ENCODE measurements at regions of chr7 and their contacts with region 1.

Region 1: DNA sequence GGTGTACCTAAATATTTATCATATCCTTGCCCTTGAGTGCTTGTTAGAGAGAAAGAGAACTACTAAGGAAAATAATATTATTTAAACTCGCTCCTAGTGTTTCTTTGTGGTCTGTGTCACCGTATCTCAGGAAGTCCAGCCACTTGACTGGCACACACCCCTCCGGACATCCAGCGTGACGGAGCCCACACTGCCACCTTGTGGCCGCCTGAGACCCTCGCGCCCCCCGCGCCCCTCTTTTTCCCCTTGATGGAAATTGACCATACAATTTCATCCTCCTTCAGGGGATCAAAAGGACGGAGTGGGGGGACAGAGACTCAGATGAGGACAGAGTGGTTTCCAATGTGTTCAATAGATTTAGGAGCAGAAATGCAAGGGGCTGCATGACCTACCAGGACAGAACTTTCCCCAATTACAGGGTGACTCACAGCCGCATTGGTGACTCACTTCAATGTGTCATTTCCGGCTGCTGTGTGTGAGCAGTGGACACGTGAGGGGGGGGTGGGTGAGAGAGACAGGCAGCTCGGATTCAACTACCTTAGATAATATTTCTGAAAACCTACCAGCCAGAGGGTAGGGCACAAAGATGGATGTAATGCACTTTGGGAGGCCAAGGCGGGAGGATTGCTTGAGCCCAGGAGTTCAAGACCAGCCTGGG is 11.4 kb downstream of the SERPINE1 start:
- DNase-seq: peak; percentile 46 to 92 (median 84)
- ATAC-seq: peak; percentile 94
- H3K4me3 ChIP-seq: no peak overlapping the region
- H3K4me3 Mint-ChIP-seq: peak overlapping the region; percentile 22
- H3K27ac ChIP-seq: no peak overlapping the region
- H3K27ac Mint-ChIP-seq: no peak overlapping the region
- H3K4me1 ChIP-seq: peaks cover 5% of the 10 kb centered on the region
- H3K4me1 Mint-ChIP-seq: peaks cover 10% of the 10 kb centered on the region
- H3K27me3 ChIP-seq: no peaks in the 10 kb centered on the region
- H3K27me3 Mint-ChIP-seq: peaks cover 16% of the 10 kb centered on the region
- CTCF ChIP-seq: peak; percentile 65

Region 2: GRCh38 chr7:100921039-100921438 is 217.3 kb before region 1 on chr7:
- CTCF ChIA-PET with region 1: no interaction called
- POLR2A ChIA-PET with region 1: no interaction called
- intact Hi-C with region 1: no loop called
- DNase-seq: no peak
- ATAC-seq: no peak
- H3K4me3 ChIP-seq: no peak overlapping the region
- H3K4me3 Mint-ChIP-seq: no peak overlapping the region
- H3K27ac ChIP-seq: no peak overlapping the region
- H3K27ac Mint-ChIP-seq: no peak overlapping the region
- H3K4me1 ChIP-seq: no peaks in the 10 kb centered on the region
- H3K4me1 Mint-ChIP-seq: no peaks in the 10 kb centered on the region
- H3K27me3 ChIP-seq: no peaks in the 10 kb centered on the region
- H3K27me3 Mint-ChIP-seq: peaks cover 19% of the 10 kb centered on the region
- CTCF ChIP-seq: no peak

Region 3: GRCh38 chr7:101085162-101085987 is 53.0 kb before region 1 on chr7 and contains the start of gene TRIM56:
- CTCF ChIA-PET with region 1: interaction called, 5 read pairs
- POLR2A ChIA-PET with region 1: no interaction called
- intact Hi-C with region 1: loop called in 1 of 2 experiments (anchors 5 kb)
- DNase-seq: peak; percentile 43 to 89 (median 76)
- ATAC-seq: peak; percentile 91
- H3K4me3 ChIP-seq: peak within 1 kb of the TSS; percentile 81 to 95
- H3K4me3 Mint-ChIP-seq: peak within 1 kb of the TSS; percentile 98
- H3K27ac ChIP-seq: peak within 1 kb of the TSS; percentile 91 to 94
- H3K27ac Mint-ChIP-seq: peak within 1 kb of the TSS; percentile 98
- H3K4me1 ChIP-seq: peaks cover 30% of the 10 kb centered on the region
- H3K4me1 Mint-ChIP-seq: peaks cover 27% of the 10 kb centered on the region
- H3K27me3 ChIP-seq: no peaks in the 10 kb centered on the region
- H3K27me3 Mint-ChIP-seq: no peaks in the 10 kb centered on the region
- CTCF ChIP-seq: no peak
- total RNA-seq, gene TRIM56: 24.0 to 26.0 TPM

Region 4: GRCh38 chr7:101153969-101154692 is 15.8 kb after region 1 on chr7 and contains the start of gene AP1S1:
- CTCF ChIA-PET with region 1: interaction called, 85 read pairs
- POLR2A ChIA-PET with region 1: no interaction called
- intact Hi-C with region 1: loop called in 1 of 2 experiments (anchors 1 kb)
- DNase-seq: peak; percentile 76 to 96 (median 87)
- ATAC-seq: peak; percentile 88
- H3K4me3 ChIP-seq: peak within 1 kb of the TSS; percentile 61 to 77
- H3K4me3 Mint-ChIP-seq: peak within 1 kb of the TSS; percentile 88
- H3K27ac ChIP-seq: no peak within 1 kb of the TSS
- H3K27ac Mint-ChIP-seq: peak within 1 kb of the TSS; percentile 47
- H3K4me1 ChIP-seq: peaks cover 12% of the 10 kb centered on the region
- H3K4me1 Mint-ChIP-seq: peaks cover 11% of the 10 kb centered on the region
- H3K27me3 ChIP-seq: no peaks in the 10 kb centered on the region
- H3K27me3 Mint-ChIP-seq: peaks cover 9% of the 10 kb centered on the region
- CTCF ChIP-seq: no peak
- total RNA-seq, gene AP1S1: 2.1 to 2.2 TPM

Region 5: DNA sequence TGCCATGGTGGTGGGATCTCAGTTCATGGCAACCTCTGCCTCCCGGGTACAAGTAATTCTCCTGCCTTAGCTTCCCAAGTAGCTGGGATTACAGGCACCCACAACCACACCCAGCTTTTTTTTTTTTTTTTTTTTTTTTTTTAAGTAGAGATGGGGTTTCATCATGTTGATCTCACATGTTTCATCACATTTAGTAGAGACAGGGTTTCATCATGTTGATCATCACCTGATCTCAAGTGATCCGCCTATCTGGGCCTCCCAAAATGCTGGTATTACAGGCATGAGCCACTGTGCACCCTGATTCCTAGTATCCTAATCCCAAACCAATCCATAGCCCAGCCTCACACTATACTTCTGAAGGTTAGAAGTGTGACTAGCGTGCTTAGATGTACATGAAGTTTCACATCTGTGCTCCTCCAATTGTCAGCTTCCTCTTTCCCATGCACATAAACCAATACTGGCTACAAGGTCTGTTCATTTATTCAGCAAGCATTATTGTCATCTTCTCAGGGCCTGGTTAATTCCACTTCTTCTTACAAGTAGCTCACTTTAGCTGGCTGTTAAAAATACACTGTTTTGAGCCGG is 48.6 kb after region 1 on chr7:
- CTCF ChIA-PET with region 1: interaction called, 136 read pairs
- POLR2A ChIA-PET with region 1: interaction called, 3 read pairs
- intact Hi-C with region 1: no loop called
- DNase-seq: no peak
- ATAC-seq: no peak
- H3K4me3 ChIP-seq: no peak overlapping the region
- H3K4me3 Mint-ChIP-seq: no peak overlapping the region
- H3K27ac ChIP-seq: no peak overlapping the region
- H3K27ac Mint-ChIP-seq: no peak overlapping the region
- H3K4me1 ChIP-seq: no peaks in the 10 kb centered on the region
- H3K4me1 Mint-ChIP-seq: peaks cover 4% of the 10 kb centered on the region
- H3K27me3 ChIP-seq: peaks cover 0 to 2% of the 10 kb centered on the region in 2 experiments
- H3K27me3 Mint-ChIP-seq: peaks cover 28% of the 10 kb centered on the region
- CTCF ChIP-seq: no peak

Region 6: GRCh38 chr7:101278461-101279292 is 140.3 kb after region 1 on chr7:
- CTCF ChIA-PET with region 1: interaction called, 104 read pairs
- POLR2A ChIA-PET with region 1: no interaction called
- intact Hi-C with region 1: no loop called
- DNase-seq: no peak
- ATAC-seq: no peak
- H3K4me3 ChIP-seq: no peak overlapping the region
- H3K4me3 Mint-ChIP-seq: no peak overlapping the region
- H3K27ac ChIP-seq: no peak overlapping the region
- H3K27ac Mint-ChIP-seq: no peak overlapping the region
- H3K4me1 ChIP-seq: peaks cover 4% of the 10 kb centered on the region
- H3K4me1 Mint-ChIP-seq: peaks cover 6% of the 10 kb centered on the region
- H3K27me3 ChIP-seq: no peaks in the 10 kb centered on the region
- H3K27me3 Mint-ChIP-seq: peaks cover 20% of the 10 kb centered on the region
- CTCF ChIP-seq: no peak

Region 7: GRCh38 chr7:101299511-101300464 is 161.4 kb after region 1 on chr7:
- CTCF ChIA-PET with region 1: no interaction called
- POLR2A ChIA-PET with region 1: no interaction called
- intact Hi-C with region 1: no loop called
- DNase-seq: no peak
- ATAC-seq: no peak
- H3K4me3 ChIP-seq: no peak overlapping the region
- H3K4me3 Mint-ChIP-seq: peak overlapping the region; percentile 42
- H3K27ac ChIP-seq: no peak overlapping the region
- H3K27ac Mint-ChIP-seq: no peak overlapping the region
- H3K4me1 ChIP-seq: no peaks in the 10 kb centered on the region
- H3K4me1 Mint-ChIP-seq: peaks cover 10% of the 10 kb centered on the region
- H3K27me3 ChIP-seq: peaks cover 30 to 49% of the 10 kb centered on the region in 2 experiments
- H3K27me3 Mint-ChIP-seq: peaks cover 50% of the 10 kb centered on the region
- CTCF ChIP-seq: no peak

Measured in CD8-positive, alpha-beta T cell (primary cell).